Sigmoid colon (tissue), 7 donors: ENCODE measurements at regions of chr11 and their contacts with region 1.

Region 1: GRCh38 chr11:118791111-118791965 is at the start of gene DDX6:
- DNase-seq: peak; percentile 96
- H3K4me3 ChIP-seq: peak within 1 kb of the TSS; percentile 66 to 95 (median 90)
- H3K27ac ChIP-seq: peak within 1 kb of the TSS; percentile 97 to 99 (median 98)
- H3K4me1 ChIP-seq: peaks cover 0 to 45% (median 34%) of the 10 kb centered on the region in 4 donors
- H3K27me3 ChIP-seq: no peaks in the 10 kb centered on the region
- CTCF ChIP-seq: peak in 1 of 4 experiments; percentile 37
- EP300 ChIP-seq: no peak
- POLR2A ChIP-seq: peak; percentile 84 to 90
- total RNA-seq, gene DDX6: 97.8 to 137 (median 121) TPM

Region 2: DNA sequence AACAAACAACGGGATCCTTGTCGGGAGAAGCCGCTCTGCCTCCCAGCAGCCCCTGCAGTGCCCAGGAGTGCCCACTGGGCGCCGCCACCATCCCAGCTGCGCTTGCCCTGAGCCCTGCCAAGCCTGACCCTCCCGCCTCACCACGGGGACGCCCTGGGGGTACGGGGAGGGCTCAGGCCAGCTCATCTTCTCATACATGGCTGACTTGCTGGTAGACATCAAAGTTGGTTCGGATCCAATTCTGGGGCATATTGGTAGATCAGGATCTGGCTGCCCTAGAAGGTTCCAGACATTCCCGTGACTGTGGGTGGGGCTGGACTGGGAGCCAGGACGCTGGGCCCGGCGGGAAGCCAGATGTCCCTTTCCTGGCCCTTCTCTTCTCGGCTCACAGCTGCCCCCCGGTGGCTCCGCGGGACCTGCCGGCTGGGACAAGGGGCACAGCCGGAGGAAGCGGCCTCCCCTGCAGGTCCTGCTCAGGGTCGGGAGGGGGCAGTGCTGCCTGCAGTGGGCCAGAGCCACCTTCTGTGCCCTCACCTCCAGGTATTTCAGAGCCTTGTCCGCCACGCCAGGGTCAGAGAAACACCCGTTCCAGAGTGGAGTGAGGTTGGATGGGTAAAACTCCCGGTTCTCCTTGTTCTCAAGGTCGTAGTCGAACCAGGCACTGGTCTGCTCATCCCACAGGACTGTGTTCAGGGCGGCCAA is 101.3 kb before region 1 on chr11:
- intact Hi-C with region 1: loop called (anchors 5 kb)
- DNase-seq: peak; percentile 90
- H3K4me3 ChIP-seq: peak overlapping the region; percentile 13 to 50 (median 46)
- H3K27ac ChIP-seq: peak overlapping the region; percentile 73 to 82 (median 76)
- H3K4me1 ChIP-seq: peaks cover 0 to 19% (median 17%) of the 10 kb centered on the region in 4 donors
- H3K27me3 ChIP-seq: no peaks in the 10 kb centered on the region
- CTCF ChIP-seq: peak; percentile 79 to 95 (median 82)
- EP300 ChIP-seq: peak in 1 of 4 donors; percentile 41
- POLR2A ChIP-seq: no peak

Region 3: DNA sequence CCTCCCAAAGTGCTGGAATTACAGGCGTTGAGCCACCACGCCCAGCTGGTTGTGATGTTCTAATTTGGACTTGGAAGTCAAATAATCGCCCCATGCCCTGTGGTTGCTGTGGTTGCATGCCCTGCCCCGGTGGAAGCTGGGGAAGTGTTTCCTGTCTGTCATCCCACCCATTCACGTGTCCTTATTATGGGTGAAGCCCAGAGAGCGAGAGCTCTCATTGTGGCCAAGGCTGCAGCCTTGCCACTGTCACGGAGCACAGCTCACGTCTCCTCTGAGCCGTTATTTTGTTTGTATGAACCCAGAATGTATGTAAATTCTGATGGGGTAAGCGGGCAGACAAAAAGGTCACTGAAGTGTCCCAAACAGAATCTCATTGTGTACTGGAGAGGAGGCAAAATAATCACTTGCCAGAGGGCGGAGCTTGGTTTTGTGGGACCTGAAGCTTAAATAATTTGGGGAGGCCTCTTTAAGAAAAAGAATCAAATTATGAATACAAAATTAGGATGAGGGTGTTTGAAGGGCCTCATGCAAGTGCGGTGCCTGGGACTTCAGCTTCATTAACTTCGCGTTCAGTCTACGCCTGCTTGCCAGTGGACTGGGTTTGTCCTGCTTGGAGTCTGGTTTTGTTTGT is 86.1 kb before region 1 on chr11:
- intact Hi-C with region 1: no loop called
- DNase-seq: no peak
- H3K4me3 ChIP-seq: no peak overlapping the region
- H3K27ac ChIP-seq: no peak overlapping the region
- H3K4me1 ChIP-seq: no peaks in the 10 kb centered on the region
- H3K27me3 ChIP-seq: no peaks in the 10 kb centered on the region
- CTCF ChIP-seq: no peak
- EP300 ChIP-seq: no peak
- POLR2A ChIP-seq: no peak

Region 4: GRCh38 chr11:118757876-118758399 is 33.4 kb before region 1 on chr11:
- intact Hi-C with region 1: no loop called
- DNase-seq: no peak
- H3K4me3 ChIP-seq: no peak overlapping the region
- H3K27ac ChIP-seq: no peak overlapping the region
- H3K4me1 ChIP-seq: peaks cover 0 to 4% (median 2%) of the 10 kb centered on the region in 4 donors
- H3K27me3 ChIP-seq: no peaks in the 10 kb centered on the region
- CTCF ChIP-seq: no peak
- EP300 ChIP-seq: no peak
- POLR2A ChIP-seq: no peak

Region 5: DNA sequence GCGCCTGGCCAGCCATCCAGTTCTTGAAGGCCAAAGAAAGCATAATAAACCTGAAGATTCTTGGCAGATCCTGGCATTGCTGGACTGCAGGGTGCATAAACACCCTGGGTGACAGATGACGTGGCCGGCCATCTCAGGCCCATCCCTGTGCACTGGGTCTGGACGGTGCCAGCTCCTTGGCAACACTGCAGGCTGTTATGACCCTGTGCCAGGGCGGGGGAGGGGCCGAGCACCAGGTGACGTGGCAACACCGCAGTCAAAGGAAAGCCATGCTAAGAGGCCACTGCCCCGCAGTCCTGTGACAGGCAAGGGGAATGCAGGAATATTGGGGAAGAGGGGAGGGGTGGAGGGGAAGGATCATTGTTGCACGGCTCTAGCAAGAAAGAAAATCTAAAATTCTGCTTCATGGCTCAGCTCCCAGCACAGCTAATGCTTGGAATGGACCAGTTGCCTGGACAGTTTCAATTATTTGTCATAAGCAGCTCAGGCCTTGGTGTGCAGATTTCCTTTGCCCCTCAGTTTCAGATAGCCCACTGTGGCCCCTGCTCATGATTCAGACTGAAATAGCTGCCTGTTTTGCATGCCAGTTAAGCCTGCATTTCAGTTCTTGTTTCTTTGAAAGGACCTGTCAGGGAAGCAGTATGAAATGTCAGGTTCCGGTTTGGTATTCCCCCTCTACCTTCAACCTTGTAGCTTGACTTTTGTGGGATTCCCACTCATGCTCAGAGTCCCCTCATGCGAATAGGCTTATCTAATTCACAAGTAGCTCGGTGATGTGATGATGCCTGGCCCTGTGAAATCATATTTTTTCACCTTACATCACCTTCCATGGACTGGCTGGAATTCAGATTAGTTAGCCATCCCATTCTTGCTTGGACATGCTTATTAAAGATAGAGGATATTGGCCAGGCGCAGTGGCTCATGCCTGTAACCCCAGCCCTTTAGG is 29.3 kb after region 1 on chr11:
- intact Hi-C with region 1: loop called (anchors 2 kb)
- DNase-seq: peak; percentile 96
- H3K4me3 ChIP-seq: no peak overlapping the region
- H3K27ac ChIP-seq: peak overlapping the region; percentile 83 to 84 (median 84)
- H3K4me1 ChIP-seq: peaks cover 0 to 20% (median 18%) of the 10 kb centered on the region in 4 donors
- H3K27me3 ChIP-seq: no peaks in the 10 kb centered on the region
- CTCF ChIP-seq: no peak
- EP300 ChIP-seq: peak in 3 of 4 donors; percentile 15 to 72 (median 45)
- POLR2A ChIP-seq: no peak

Region 6: GRCh38 chr11:118907051-118908042 is 116.0 kb after region 1 on chr11:
- intact Hi-C with region 1: loop called (anchors 5 kb)
- DNase-seq: peak; percentile 92
- H3K4me3 ChIP-seq: no peak overlapping the region
- H3K27ac ChIP-seq: peak overlapping the region; percentile 95 to 100 (median 100)
- H3K4me1 ChIP-seq: peaks cover 0 to 68% (median 62%) of the 10 kb centered on the region in 4 donors
- H3K27me3 ChIP-seq: no peaks in the 10 kb centered on the region
- CTCF ChIP-seq: peak; percentile 94 to 99 (median 98)
- EP300 ChIP-seq: no peak
- POLR2A ChIP-seq: no peak

Region 7: DNA sequence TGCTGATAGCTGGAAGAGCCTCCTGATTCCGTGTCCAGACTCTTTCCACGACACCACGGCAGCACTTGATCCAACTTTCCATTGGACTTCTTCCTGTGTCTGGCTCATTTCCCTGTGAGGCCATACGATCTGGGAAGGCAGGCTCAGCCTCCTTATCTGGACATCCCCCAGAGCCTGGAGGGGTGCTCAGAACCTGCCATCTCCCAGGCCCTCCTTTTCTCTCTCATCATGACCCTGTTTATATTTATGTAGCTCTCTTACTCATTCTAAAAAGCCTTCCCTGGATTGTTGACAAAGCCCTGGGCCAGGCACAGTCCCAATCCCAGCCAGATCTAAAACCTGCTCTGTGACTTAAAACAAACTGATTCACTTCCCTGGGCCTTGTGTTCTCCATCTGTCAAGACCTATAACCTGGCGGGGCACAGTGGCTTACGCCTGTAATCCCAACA is 142.2 kb after region 1 on chr11:
- intact Hi-C with region 1: no loop called
- DNase-seq: peak; percentile 86
- H3K4me3 ChIP-seq: no peak overlapping the region
- H3K27ac ChIP-seq: peak overlapping the region; percentile 55 to 83 (median 76)
- H3K4me1 ChIP-seq: peaks cover 0 to 30% (median 26%) of the 10 kb centered on the region in 4 donors
- H3K27me3 ChIP-seq: no peaks in the 10 kb centered on the region
- CTCF ChIP-seq: no peak
- EP300 ChIP-seq: peak in 1 of 4 donors; percentile 51
- POLR2A ChIP-seq: no peak